Dendritic cell treated with granulocyte-macrophage colony-stimulating factor and Interleukin-4, amounts not matched to agents 40 ng/mL and 50 ng/mL, for 4 days (primary cell): ENCODE measurements at regions of chr6 and their contacts with region 1.

Region 1: GRCh38 chr6:160534050-160534696 is 129.9 kb downstream of the LPA start:
- H3K4me3 Mint-ChIP-seq: no peak overlapping the region
- H3K27ac Mint-ChIP-seq: no peak overlapping the region
- H3K4me1 Mint-ChIP-seq: no peaks in the 10 kb centered on the region
- H3K27me3 Mint-ChIP-seq: peaks cover 5% of the 10 kb centered on the region

Region 2: DNA sequence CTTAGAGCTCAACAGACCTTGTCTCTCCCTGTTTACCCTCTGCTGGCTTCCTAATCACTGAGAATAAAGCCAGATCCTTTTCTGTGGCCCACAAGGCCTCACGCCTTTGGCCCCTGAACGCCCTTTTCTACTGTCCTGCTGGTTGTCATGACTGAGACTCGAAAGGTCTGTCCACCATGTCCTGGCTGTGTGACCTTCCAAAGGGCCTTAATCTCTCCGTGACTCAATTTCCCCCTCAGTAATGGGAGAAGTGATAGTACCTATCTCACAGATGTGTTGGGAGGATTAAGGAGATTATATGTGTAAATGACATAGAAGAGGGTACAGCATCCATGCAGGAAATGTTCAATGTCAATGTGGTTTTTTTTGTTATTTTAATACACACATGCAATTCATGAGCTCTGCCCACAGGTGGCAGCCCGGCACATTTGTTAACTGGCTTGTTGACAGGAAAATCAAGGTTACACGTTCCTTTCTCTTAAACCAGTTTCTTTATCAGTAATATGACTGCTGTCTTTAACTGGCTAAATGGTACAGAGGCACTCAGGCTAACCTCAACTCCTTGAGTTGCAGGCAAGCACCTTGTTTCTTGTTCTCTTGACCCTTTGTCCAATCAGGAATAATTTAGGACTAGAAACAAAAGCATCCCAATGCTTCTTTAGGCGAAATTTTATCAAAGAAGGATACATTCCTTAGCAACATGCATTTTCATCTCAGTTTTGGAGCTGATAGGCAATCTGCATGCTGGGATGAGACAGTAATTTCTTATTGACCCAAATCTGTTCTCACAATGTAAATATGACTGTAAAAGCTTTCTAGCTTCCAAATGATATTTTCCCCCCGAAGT is 396.0 kb before region 1 on chr6:
- intact Hi-C with region 1: loop called (anchors 5 kb)
- H3K4me3 Mint-ChIP-seq: no peak overlapping the region
- H3K27ac Mint-ChIP-seq: no peak overlapping the region
- H3K4me1 Mint-ChIP-seq: no peaks in the 10 kb centered on the region
- H3K27me3 Mint-ChIP-seq: peaks cover 16% of the 10 kb centered on the region

Region 3: GRCh38 chr6:160505970-160506369 is 28.2 kb before region 1 on chr6:
- intact Hi-C with region 1: no loop called
- H3K4me3 Mint-ChIP-seq: no peak overlapping the region
- H3K27ac Mint-ChIP-seq: no peak overlapping the region
- H3K4me1 Mint-ChIP-seq: no peaks in the 10 kb centered on the region
- H3K27me3 Mint-ChIP-seq: peaks cover 11% of the 10 kb centered on the region

Region 4: DNA sequence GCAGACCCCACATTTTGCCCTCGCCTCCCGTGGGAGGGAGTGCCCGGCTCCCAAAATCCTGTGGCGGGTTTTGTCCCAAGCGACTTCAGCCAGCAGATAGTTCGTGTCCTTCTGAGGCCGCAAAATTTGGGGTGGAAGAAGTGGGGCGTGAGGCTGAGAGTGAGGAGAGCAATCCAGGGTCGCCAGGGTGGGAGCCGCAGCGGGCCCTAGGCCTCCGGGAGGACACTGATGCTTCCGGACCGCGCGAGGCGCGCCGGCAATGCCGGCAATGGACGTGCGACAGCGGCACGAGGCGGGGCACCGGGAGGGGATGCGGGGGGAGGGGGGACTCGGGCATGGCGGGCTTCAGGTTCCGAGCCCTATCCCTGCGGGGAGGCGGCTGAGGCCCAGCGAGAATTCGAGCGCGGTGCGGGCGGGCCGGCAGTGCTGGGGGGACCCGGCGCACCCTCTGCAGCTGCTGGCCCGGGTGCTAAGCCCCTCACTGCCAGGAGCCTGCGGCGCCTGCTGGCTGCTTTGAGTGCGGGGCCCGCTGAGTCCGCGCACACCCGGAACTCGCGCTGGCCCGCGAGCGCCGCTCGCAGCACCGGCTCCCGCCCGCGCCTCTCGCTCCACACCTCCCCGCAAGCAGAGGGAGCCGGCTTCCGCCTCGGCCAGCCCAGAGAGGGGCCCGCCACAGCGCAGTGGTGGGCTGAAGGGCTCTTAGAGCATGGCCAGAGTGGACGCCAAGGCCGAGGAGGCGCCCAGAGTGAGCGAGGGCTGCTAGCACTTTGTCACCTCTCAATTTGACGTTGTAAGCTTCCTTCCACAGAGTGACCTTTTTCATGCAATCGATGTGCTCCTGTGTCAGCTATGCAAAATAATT is 13.9 kb before region 1 on chr6:
- intact Hi-C with region 1: loop called (anchors 1 kb)
- H3K4me3 Mint-ChIP-seq: peak overlapping the region; percentile 94
- H3K27ac Mint-ChIP-seq: peak overlapping the region; percentile 55
- H3K4me1 Mint-ChIP-seq: peaks cover 5% of the 10 kb centered on the region
- H3K27me3 Mint-ChIP-seq: peaks cover 52% of the 10 kb centered on the region